ENCODE measurements at regions of chr10 and their contacts with region 1.

Region 1: GRCh38 chr10:110774069-110775019 is 97.4 kb upstream of the PDCD4 start:
- DNase-seq: peak; percentile 83
- H3K4me3 Mint-ChIP-seq: peak overlapping the region; percentile 40
- H3K27ac Mint-ChIP-seq: peak overlapping the region; percentile 93
- H3K4me1 Mint-ChIP-seq: peaks cover 50% of the 10 kb centered on the region
- H3K27me3 Mint-ChIP-seq: peaks cover 3% of the 10 kb centered on the region

Region 2: GRCh38 chr10:109358325-109358724 is 1416.0 kb before region 1 on chr10:
- intact Hi-C with region 1: no loop called
- DNase-seq: no peak
- H3K4me3 Mint-ChIP-seq: no peak overlapping the region
- H3K27ac Mint-ChIP-seq: no peak overlapping the region
- H3K4me1 Mint-ChIP-seq: no peaks in the 10 kb centered on the region
- H3K27me3 Mint-ChIP-seq: no peaks in the 10 kb centered on the region

Region 3: DNA sequence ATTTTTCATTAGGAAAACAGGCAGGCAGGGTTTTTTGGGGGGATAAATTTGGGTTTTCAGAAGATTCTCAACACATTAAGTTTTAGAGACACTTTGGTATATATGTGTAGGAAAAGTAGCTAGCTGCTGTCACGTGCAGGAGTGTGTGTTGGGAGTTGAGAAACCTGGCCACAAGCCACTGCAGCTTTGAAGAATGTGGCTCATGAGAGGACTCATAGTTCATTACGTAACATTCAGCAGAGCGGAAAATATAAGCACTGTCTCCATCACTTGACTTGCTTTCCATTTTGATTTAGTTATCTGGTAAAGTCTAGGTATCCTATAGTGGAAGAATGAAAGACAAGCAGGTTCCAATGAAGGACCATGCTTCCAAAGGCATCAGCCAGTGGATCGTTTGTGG is 500.9 kb before region 1 on chr10:
- intact Hi-C with region 1: no loop called
- DNase-seq: no peak
- H3K4me3 Mint-ChIP-seq: no peak overlapping the region
- H3K27ac Mint-ChIP-seq: no peak overlapping the region
- H3K4me1 Mint-ChIP-seq: peaks cover 21% of the 10 kb centered on the region
- H3K27me3 Mint-ChIP-seq: peaks cover 30% of the 10 kb centered on the region

Region 4: DNA sequence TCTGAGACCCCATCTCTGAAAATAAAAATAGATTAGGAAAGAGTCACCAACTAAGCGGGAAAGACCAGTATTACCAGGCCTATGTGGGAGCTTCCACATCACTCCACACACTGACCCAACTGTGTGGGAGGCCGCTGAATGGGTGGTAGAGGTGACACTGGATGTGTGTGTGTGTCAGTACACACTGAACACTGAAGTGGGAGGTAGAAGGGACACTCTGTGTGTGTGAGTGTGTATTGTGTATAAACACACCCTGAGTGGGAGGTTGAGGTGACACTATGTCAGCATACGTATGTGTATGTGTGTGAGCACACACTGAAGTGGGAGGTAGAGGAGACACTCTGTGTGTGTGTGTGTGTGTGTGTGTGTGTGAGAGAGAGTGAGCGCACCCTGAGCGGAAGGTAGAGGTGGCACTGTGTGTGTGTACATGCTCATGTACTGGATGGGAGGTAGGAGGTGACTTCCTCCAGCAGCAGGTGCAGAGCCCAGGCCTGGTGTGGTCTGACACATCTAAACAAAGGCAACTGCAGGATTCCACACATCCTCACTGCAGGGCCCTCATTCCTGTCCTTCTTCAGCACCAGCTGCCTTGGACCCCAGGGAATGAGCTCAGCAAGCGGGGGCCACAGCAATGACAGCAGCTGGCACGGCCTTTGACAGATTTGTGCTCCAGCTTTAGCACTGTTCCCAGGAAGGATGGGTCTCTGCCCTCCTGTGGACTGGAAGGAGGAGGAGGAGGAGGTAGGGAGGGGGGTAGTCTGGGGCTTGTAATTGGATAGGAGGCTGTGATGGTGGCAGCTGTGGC is 156.7 kb before region 1 on chr10:
- intact Hi-C with region 1: loop called (anchors 1 kb)
- DNase-seq: peak; percentile 54
- H3K4me3 Mint-ChIP-seq: peak overlapping the region; percentile 56
- H3K27ac Mint-ChIP-seq: peak overlapping the region; percentile 90
- H3K4me1 Mint-ChIP-seq: peaks cover 54% of the 10 kb centered on the region
- H3K27me3 Mint-ChIP-seq: no peaks in the 10 kb centered on the region

Region 5: DNA sequence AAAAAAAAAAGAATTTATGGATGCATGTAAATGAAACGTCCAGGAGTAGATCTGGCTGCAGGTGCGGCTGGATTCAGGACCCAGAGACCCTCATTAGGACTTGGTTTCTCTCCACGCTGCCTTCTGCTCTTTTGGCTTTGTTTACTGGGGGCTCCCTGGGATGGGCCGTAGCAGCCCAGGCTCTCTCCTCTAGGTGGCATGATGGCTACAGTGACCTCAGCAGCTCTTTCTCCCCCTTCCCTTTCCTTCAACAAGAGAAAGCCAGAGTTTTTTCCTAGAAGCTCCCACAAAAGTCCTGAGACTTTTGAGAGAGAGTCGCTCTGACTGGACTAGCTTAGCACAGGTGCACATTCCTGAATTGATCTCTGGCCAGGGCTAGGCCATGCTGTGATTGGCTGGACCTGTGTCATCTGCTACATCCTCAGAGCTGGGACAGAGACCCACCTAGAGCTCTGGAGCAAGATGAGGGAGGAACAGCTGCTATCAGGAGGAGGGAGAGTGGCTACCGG is 29.5 kb after region 1 on chr10:
- intact Hi-C with region 1: loop called (anchors 2 kb)
- DNase-seq: peak; percentile 72
- H3K4me3 Mint-ChIP-seq: peak overlapping the region; percentile 23
- H3K27ac Mint-ChIP-seq: peak overlapping the region; percentile 17
- H3K4me1 Mint-ChIP-seq: peaks cover 38% of the 10 kb centered on the region
- H3K27me3 Mint-ChIP-seq: no peaks in the 10 kb centered on the region

Region 6: DNA sequence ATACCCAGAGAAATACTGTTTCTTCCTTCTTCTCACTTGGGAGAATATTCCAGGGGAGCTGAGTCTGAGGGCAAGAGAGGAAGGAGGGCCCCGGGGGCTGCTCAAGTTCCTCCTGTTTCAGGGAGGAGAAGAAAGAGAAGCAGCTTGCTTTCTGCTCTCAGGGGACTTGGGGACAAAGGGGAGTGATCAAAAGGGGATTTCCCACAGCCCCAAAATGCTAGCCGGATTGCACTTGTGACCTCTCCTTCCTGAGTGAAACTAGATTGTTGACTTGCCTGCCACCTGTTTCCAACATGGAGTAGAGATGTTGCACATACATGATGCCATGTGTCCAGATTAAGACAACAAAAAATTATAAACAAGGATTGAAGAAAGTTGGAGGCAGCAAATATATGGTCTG is 68.7 kb after region 1 on chr10:
- intact Hi-C with region 1: loop called (anchors 1 kb)
- DNase-seq: peak; percentile 90
- H3K4me3 Mint-ChIP-seq: peak overlapping the region; percentile 30
- H3K27ac Mint-ChIP-seq: peak overlapping the region; percentile 82
- H3K4me1 Mint-ChIP-seq: peaks cover 49% of the 10 kb centered on the region
- H3K27me3 Mint-ChIP-seq: no peaks in the 10 kb centered on the region

Region 7: DNA sequence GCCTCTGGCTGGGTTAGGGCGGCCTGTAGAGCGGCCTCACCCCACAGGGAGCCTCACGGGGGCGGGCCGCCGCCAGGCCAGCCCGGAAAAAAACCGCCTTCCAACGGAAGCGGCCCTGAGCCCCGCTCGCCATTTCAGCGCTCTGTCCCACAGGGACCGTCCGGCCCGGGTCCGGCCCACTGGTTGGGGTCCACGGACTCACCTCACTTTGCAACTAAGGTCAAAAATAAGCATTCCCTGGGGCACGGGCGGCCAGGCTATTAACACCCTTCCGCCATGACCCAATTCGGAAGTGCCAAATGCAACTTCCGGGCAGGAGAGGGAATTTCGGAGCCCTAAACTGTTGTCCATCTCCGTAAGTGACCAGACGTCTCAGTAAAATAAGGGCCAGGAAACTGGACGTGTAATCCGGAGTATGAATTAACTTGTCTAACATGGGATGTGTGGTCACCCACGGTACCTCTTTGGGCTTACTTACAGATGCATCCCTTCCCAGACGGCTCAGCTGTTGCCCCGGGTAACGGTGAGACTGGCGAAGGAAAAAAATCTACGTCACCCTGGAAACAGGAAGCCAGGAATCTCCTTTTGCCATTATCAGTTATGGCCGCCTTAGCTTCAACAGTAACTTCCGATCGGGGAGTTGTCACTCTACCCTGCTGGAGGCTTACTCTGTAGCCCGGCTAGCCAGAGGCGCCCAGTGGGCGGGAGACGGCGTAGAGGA is 144.5 kb after region 1 on chr10 and contains the start of gene BBIP1:
- intact Hi-C with region 1: loop called (anchors 1 kb)
- DNase-seq: no peak
- H3K4me3 Mint-ChIP-seq: peak within 1 kb of the TSS; percentile 91
- H3K27ac Mint-ChIP-seq: peak within 1 kb of the TSS; percentile 99
- H3K4me1 Mint-ChIP-seq: peaks cover 36% of the 10 kb centered on the region
- H3K27me3 Mint-ChIP-seq: no peaks in the 10 kb centered on the region
- total RNA-seq, gene BBIP1: 26.3 and 31.1 TPM in 2 replicates